ENCODE measurements at regions of chr19 and their contacts with region 1.

Region 1: DNA sequence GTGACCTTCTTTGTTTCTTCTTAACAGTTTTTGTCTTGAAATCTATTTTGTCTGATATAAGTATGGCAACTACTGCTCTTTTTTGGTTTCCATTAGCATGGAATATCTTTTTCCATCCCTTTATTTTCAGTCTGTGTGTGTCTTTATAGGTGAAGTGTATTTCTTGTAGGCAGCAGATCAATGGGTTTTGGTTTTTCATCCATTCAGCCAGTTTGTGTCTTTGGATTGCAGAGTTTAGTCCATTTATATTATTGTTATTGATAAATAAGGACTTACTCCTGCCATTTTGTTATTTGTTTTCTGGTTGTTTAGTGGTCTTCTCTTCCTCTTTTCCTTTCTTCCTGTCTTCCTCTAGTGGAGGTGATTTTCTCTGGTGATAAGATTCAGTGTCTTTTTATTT is 54.4 kb downstream of the ZNF136 start:
- DNase-seq: no peak
- ATAC-seq: no peak
- H3K4me3 ChIP-seq: no peak overlapping the region
- H3K27ac ChIP-seq: no peak overlapping the region
- H3K4me1 ChIP-seq: no peaks in the 10 kb centered on the region
- H3K27me3 ChIP-seq: no peaks in the 10 kb centered on the region
- CTCF ChIP-seq: no peak

Region 2: DNA sequence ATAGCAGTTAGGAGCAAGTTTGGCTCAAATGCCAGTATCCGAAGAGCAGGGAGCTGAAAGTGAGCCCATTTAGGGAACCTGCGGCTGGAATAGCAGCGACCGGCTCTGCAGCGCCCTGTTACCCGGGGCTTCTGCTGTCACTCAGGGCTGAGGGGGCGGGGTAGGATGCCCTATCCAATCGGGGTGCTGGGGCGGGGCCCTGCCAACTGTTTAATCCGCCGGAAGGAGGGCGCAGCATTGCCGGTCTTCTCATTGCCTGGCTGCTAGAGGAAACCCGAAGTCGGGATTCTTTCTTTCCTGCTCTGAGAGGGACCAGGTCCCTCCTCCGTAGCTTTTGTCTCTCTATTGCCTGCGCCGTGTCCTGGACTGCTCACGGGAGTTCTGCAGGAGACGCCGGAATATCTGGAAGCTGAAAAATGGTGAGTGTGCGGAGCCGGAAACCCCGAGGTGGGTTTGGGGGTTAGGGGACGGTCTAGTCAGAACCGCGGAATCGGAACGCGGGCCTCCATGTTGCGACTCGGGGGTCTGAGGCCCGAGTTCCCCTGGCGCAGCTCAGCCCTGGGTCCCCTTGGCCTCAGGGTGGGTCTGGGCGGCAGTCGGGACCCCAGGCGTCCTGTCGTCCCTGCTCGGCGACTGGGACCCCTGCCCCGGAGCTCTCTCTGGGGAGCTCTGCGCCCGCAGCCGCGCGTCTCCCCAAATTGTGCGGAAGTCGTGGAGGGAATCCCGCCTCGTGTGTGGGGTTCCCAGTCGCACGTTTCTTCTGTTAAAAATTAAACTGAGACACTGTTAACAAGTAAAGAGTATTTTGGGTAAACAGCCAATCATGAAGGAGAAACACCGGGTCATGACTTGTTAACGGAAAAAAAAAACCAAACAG is 229.7 kb before region 1 on chr19:
- intact Hi-C with region 1: no loop called
- DNase-seq: peak; percentile 92 to 97 (median 94)
- ATAC-seq: peak; percentile 96 to 100 (median 98)
- H3K4me3 ChIP-seq: peak overlapping the region; percentile 42 to 82 (median 52)
- H3K27ac ChIP-seq: peak overlapping the region; percentile 64 to 80 (median 72)
- H3K4me1 ChIP-seq: peaks cover 0 to 2% (median 0%) of the 10 kb centered on the region in 3 donors
- H3K27me3 ChIP-seq: no peaks in the 10 kb centered on the region
- CTCF ChIP-seq: no peak

Region 3: GRCh38 chr19:12156223-12157058 is 60.9 kb before region 1 on chr19 and contains the start of gene ZNF625:
- intact Hi-C with region 1: no loop called
- DNase-seq: peak; percentile 80 to 95 (median 87)
- ATAC-seq: peak; percentile 96 to 99 (median 99)
- H3K4me3 ChIP-seq: peak within 1 kb of the TSS; percentile 45 to 95 (median 76)
- H3K27ac ChIP-seq: peak within 1 kb of the TSS; percentile 12 to 55 (median 26)
- H3K4me1 ChIP-seq: peaks cover 0 to 5% (median 3%) of the 10 kb centered on the region in 3 donors
- H3K27me3 ChIP-seq: no peaks in the 10 kb centered on the region
- CTCF ChIP-seq: no peak
- total RNA-seq, gene ZNF625: 1.9 to 4.3 (median 2.7) TPM

Region 4: GRCh38 chr19:12346896-12347295 is 129.6 kb after region 1 on chr19:
- intact Hi-C with region 1: loop called in 1 of 3 experiments (anchors 10 kb)
- DNase-seq: no peak
- ATAC-seq: peak in 1 of 4 donors; percentile 65
- H3K4me3 ChIP-seq: no peak overlapping the region
- H3K27ac ChIP-seq: no peak overlapping the region
- H3K4me1 ChIP-seq: no peaks in the 10 kb centered on the region
- H3K27me3 ChIP-seq: no peaks in the 10 kb centered on the region
- CTCF ChIP-seq: no peak

Region 5: DNA sequence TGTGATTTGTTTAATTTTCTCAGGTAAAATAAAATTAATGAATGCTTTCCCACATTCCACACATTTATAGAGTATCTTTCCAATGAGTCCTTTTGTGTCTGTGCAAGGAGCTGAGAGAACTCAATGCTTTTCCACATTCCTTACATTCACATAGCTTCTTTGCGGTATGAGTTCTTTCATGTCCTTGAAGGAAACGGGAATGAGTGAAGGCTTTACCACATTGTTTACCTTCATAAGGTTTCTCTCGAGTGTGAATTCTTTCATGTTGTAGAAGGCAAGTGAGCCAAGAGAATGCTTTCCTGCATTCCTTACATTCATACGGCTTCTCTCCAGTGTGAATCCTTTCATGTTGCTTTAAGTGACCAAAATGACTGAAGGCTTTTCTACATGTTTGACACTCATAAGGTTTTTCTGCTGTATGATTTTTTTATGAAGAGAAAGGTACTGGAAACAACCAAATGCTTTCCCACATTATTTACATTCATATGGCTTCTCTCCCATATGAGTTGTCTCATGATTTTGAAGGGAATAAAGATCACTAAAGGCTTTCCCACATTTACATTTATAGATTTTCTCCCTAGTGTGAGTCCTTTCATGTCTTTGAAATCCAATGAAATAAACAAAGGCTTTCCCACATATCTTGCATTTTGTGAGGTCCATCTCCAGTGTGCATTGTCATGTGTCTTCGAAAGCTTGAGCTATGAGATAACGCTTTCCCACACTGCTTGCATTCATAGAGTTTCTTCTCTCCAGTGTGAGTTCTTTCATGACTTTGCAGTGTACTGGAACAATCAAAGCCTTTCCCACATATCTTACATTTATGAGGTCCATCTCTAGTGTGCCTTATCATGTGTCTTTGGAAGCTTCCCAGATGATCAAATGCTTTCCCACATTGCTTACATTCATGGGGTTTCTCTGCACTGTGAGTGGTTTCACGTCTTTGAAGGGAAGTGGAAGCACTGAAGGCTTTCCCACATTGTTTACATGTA is 162.7 kb after region 1 on chr19:
- intact Hi-C with region 1: no loop called
- DNase-seq: no peak
- ATAC-seq: no peak
- H3K4me3 ChIP-seq: no peak overlapping the region
- H3K27ac ChIP-seq: no peak overlapping the region
- H3K4me1 ChIP-seq: no peaks in the 10 kb centered on the region
- H3K27me3 ChIP-seq: no peaks in the 10 kb centered on the region
- CTCF ChIP-seq: no peak